ENCODE measurements at regions of chr10 and their contacts with region 1.

Region 1: GRCh38 chr10:96991313-96991841 is 159.3 kb downstream of the LCOR start:
- DNase-seq: no peak
- ATAC-seq: no peak
- H3K4me3 Mint-ChIP-seq: no peak overlapping the region
- H3K27ac Mint-ChIP-seq: no peak overlapping the region
- H3K4me1 Mint-ChIP-seq: peaks cover 5% of the 10 kb centered on the region; the same call in 1 of the 2 replicates
- H3K27me3 Mint-ChIP-seq: no peaks in the 10 kb centered on the region
- CTCF ChIP-seq: no peak

Region 2: GRCh38 chr10:96896884-96897589 is 94.3 kb before region 1 on chr10:
- CTCF ChIA-PET with region 1: no interaction called
- POLR2A ChIA-PET with region 1: no interaction called
- DNase-seq: no peak
- ATAC-seq: no peak
- H3K4me3 Mint-ChIP-seq: no peak overlapping the region
- H3K27ac Mint-ChIP-seq: no peak overlapping the region
- H3K4me1 Mint-ChIP-seq: peaks cover 18% of the 10 kb centered on the region
- H3K27me3 Mint-ChIP-seq: no peaks in the 10 kb centered on the region
- CTCF ChIP-seq: no peak

Region 3: GRCh38 chr10:97004591-97004990 is 13.2 kb after region 1 on chr10:
- CTCF ChIA-PET with region 1: no interaction called
- POLR2A ChIA-PET with region 1: interaction called, 11 read pairs
- DNase-seq: no peak
- ATAC-seq: no peak
- H3K4me3 Mint-ChIP-seq: no peak overlapping the region
- H3K27ac Mint-ChIP-seq: no peak overlapping the region
- H3K4me1 Mint-ChIP-seq: peaks cover 4% of the 10 kb centered on the region
- H3K27me3 Mint-ChIP-seq: peaks cover 3% of the 10 kb centered on the region; the same call in 1 of the 2 replicates
- CTCF ChIP-seq: no peak

Measured in WTC11 (cell line).